Common myeloid progenitor, CD34-positive (primary cell): ENCODE measurements at regions of chr5 and their contacts with region 1.

Region 1: GRCh38 chr5:148397968-148398597 is 14.3 kb downstream of the FBXO38 start:
- DNase-seq: peak; percentile 40 to 70 (median 57)
- H3K4me3 ChIP-seq: peak overlapping the region in 2 of 7 experiments; percentile 3 to 11
- H3K27ac ChIP-seq: peak overlapping the region; percentile 43 to 50
- H3K4me1 ChIP-seq: peaks cover 24 to 41% (median 33%) of the 10 kb centered on the region in 4 experiments
- H3K27me3 ChIP-seq: no peaks in the 10 kb centered on the region

Region 2: GRCh38 chr5:148248894-148249293 is 149.2 kb before region 1 on chr5:
- CTCF ChIA-PET with region 1: no interaction called
- POLR2A ChIA-PET with region 1: no interaction called
- DNase-seq: no peak
- H3K4me3 ChIP-seq: no peak overlapping the region
- H3K27ac ChIP-seq: no peak overlapping the region
- H3K4me1 ChIP-seq: no peaks in the 10 kb centered on the region
- H3K27me3 ChIP-seq: peaks cover 0 to 3% (median 0%) of the 10 kb centered on the region in 5 experiments

Region 3: GRCh38 chr5:148387325-148387724 is 10.8 kb before region 1 on chr5:
- CTCF ChIA-PET with region 1: interaction called, 10 read pairs
- POLR2A ChIA-PET with region 1: interaction called, 4 read pairs
- DNase-seq: no peak
- H3K4me3 ChIP-seq: no peak overlapping the region
- H3K27ac ChIP-seq: no peak overlapping the region
- H3K4me1 ChIP-seq: peaks cover 14 to 27% (median 16%) of the 10 kb centered on the region in 4 experiments
- H3K27me3 ChIP-seq: no peaks in the 10 kb centered on the region